OCI-LY7 (cell line): ENCODE measurements at regions of chr4 and their contacts with region 1.

Region 1: DNA sequence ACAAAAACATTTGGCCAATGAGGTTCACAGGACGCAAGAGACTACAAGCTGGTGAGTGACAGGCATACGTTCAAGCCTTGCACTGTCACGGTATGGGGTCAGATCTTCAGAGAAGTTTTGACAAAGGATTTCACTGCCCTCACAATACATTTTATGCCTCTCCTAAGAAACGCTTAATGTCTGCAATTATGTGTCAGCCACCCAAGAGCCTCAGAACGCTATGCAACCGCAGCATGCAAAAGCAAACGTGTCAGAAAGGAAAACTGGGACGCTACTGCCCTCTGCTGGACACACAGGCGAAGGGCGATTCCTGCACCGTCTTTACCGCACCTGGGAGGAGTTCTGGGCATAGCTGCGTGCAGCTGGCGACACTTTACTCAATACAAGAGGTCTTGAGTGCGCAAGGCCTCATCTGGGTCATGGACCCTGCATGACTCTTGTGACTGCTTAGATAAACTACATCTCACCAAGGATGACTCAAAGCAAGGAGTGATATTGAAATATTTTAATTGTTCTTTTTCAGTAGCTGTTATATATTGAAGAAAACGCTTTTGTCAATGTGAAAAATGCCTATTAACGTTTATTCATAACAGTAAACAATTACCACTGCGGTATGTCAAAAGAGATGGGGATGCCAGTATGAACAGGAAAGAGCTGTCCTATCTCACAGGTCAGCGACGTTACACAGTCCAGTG is 147.6 kb upstream of the FRG1 start:
- DNase-seq: peak; percentile 33
- H3K4me3 ChIP-seq: no peak overlapping the region
- H3K27ac ChIP-seq: no peak overlapping the region
- H3K4me1 ChIP-seq: no peaks in the 10 kb centered on the region
- CTCF ChIP-seq: peak; percentile 89

Region 2: GRCh38 chr4:189304750-189305149 is 488.3 kb before region 1 on chr4:
- CTCF ChIA-PET with region 1: no interaction called
- POLR2A ChIA-PET with region 1: no interaction called
- intact Hi-C with region 1: no loop called
- DNase-seq: no peak
- H3K4me3 ChIP-seq: no peak overlapping the region
- H3K27ac ChIP-seq: no peak overlapping the region
- H3K4me1 ChIP-seq: no peaks in the 10 kb centered on the region
- CTCF ChIP-seq: no peak

Region 3: DNA sequence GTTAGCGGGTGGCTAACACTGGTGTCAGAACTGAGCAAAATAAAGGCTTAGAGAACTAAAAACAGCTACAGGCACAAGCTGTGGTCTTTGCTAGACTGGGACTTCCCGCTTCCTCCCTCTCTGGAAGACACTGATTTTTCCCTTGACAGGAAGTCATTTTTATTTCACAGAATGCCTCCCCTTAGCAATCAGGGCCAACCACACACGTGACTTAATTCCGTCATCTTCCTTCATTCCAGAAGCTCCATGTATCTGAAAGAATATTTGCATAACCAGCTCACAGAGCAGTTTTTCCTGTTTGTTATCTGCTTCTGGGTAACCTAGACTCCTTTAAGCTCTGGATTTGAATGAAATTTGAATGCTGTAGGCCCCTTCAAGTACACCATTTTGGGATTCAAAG is 179.9 kb before region 1 on chr4:
- CTCF ChIA-PET with region 1: no interaction called
- POLR2A ChIA-PET with region 1: no interaction called
- intact Hi-C with region 1: no loop called
- DNase-seq: no peak
- H3K4me3 ChIP-seq: no peak overlapping the region
- H3K27ac ChIP-seq: no peak overlapping the region
- H3K4me1 ChIP-seq: no peaks in the 10 kb centered on the region
- CTCF ChIP-seq: no peak

Region 4: GRCh38 chr4:189780391-189780790 is 12.7 kb before region 1 on chr4:
- CTCF ChIA-PET with region 1: no interaction called
- POLR2A ChIA-PET with region 1: no interaction called
- intact Hi-C with region 1: no loop called
- DNase-seq: no peak
- H3K4me3 ChIP-seq: no peak overlapping the region
- H3K27ac ChIP-seq: no peak overlapping the region
- H3K4me1 ChIP-seq: no peaks in the 10 kb centered on the region
- CTCF ChIP-seq: no peak

Region 5: DNA sequence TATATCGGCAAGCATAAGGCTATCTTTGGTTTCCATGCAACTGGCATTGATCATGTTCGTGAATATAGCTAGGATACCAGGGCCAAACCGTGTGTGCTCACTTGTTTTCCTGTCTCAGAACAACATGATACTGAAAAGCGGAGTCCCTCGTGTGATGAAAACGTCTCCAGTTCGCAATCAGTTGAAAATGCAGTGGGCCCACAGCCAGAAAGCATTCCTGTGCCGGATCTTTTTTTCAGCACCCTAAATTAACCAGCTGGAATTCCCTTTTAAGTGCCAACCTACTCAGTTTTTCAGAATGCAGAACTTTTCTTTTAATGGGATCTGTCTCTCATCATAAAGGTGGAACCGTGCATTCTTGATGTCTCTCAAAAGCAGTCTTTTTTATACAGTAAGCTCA is 16.8 kb after region 1 on chr4:
- CTCF ChIA-PET with region 1: no interaction called
- POLR2A ChIA-PET with region 1: no interaction called
- intact Hi-C with region 1: no loop called
- DNase-seq: no peak
- H3K4me3 ChIP-seq: no peak overlapping the region
- H3K27ac ChIP-seq: no peak overlapping the region
- H3K4me1 ChIP-seq: no peaks in the 10 kb centered on the region
- CTCF ChIP-seq: no peak

Region 6: DNA sequence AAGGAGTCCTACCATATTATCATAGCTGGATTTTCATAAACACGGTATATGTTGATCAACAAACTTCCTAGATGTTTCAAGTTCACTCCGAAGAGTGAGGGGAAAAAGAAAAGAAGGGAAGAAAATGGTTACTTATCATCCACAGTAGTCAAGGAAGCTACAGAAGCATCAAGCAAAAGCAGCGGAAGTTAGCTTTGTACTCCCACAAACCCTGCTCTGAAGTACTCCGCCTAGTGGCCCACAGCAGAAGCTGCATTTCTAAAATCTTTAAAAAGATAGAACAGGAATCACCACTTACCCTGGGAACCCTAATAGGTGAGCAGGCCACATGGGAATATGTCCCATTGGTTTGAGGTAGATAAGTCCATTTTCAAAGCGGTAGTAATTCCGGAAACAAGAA is 119.1 kb after region 1 on chr4:
- CTCF ChIA-PET with region 1: no interaction called
- POLR2A ChIA-PET with region 1: no interaction called
- intact Hi-C with region 1: loop called (anchors 10 kb)
- DNase-seq: peak; percentile 35
- H3K4me3 ChIP-seq: no peak overlapping the region
- H3K27ac ChIP-seq: no peak overlapping the region
- H3K4me1 ChIP-seq: no peaks in the 10 kb centered on the region
- CTCF ChIP-seq: peak; percentile 78